RWPE1 (cell line): ENCODE measurements at regions of chr7 and their contacts with region 1.

Region 1: DNA sequence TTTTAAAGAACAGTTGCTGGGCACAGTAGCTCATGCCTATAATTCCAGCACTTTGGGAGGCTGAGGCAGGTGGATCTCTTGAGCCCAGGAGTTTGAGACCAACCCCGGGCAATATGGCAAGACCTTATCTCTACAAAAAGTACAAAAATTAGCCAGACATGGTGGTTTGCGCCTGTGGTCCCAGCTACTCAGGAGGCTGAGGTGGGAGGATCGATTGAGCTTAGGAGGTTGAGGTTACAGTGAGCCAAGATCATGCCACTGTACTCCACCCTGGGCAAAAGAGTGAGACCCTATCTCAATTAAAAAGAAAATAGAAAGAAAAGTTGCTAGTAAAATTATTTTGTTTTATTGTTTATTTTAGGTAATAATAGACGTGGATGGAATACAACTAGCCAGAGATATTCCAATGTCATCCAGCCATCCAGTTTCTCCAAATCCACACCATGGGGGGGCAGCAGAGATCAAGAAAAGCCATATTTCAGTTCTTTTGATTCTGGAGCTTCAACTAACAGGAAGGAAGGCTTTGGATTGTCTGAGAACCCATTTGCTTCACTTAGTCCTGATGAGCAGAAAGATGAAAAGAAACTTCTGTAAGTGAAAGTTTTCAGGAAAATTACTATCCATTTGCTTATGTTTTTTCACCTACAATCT is 3.0 kb downstream of the NUP42 start:
- DNase-seq: peak; percentile 39
- H3K27ac ChIP-seq: no peak overlapping the region
- CTCF ChIP-seq: peak; percentile 72

Region 2: DNA sequence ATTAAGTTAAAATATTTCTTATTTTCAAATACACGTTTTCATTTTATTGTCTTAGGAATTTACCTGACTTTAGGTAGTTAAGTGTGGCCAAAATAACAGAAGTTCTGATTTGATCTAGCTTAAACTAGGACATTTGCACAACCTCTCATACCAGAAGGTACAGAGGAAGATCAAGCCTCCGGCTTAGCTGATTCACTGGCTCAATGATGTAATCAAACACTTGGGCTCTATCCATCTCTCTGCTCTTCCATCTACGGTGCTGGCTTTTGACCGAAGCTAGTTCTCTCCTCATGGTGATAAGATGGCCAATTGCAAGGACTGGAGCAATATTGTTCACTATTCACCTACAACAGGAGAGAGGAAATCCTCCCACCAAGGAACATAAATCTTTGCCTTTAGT is 158.7 kb before region 1 on chr7:
- CTCF ChIA-PET with region 1: no interaction called
- POLR2A ChIA-PET with region 1: no interaction called
- DNase-seq: peak; percentile 38
- H3K27ac ChIP-seq: no peak overlapping the region
- CTCF ChIP-seq: no peak

Region 3: GRCh38 chr7:23123007-23123406 is 61.8 kb before region 1 on chr7:
- CTCF ChIA-PET with region 1: no interaction called
- POLR2A ChIA-PET with region 1: no interaction called
- DNase-seq: no peak
- H3K27ac ChIP-seq: no peak overlapping the region
- CTCF ChIP-seq: no peak

Region 4: GRCh38 chr7:23161482-23161881 is 23.4 kb before region 1 on chr7:
- CTCF ChIA-PET with region 1: no interaction called
- POLR2A ChIA-PET with region 1: no interaction called
- DNase-seq: no peak
- H3K27ac ChIP-seq: no peak overlapping the region
- CTCF ChIP-seq: no peak

Region 5: GRCh38 chr7:23247603-23248335 is 62.9 kb after region 1 on chr7:
- CTCF ChIA-PET with region 1: interaction called, 12 read pairs
- POLR2A ChIA-PET with region 1: no interaction called
- DNase-seq: no peak
- H3K27ac ChIP-seq: no peak overlapping the region; the same call in 1 of the 2 replicates
- CTCF ChIP-seq: no peak

Region 6: DNA sequence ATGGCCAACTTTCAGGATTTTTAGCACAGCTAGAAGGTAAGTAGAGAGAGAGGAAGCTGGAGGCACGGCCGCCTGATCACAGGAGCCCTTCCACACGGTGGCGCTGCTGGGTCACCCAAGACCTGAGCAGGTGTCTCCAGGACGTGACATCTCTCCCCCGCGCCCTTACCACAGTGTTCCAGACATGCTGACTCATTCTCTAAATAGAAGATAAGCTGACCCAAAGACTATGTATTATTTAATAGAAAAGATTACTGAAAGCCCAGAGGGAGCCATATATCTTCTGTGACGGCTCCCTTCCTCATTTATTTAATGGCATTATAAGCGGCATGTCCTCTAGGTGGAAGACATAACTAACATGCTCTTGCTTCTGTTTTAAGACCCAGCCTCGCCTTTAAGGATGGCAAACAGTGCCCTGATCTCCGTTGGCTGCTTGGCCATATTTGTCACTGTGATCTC is 88.3 kb after region 1 on chr7:
- CTCF ChIA-PET with region 1: interaction called, 14 read pairs
- POLR2A ChIA-PET with region 1: no interaction called
- DNase-seq: peak; percentile 86
- H3K27ac ChIP-seq: 0 out of 2 replicates have a peak overlapping the region, but pooled peaks have one; percentile 14
- CTCF ChIP-seq: peak; percentile 94